ENCODE measurements at regions of chr1 and their contacts with region 1.

Region 1: DNA sequence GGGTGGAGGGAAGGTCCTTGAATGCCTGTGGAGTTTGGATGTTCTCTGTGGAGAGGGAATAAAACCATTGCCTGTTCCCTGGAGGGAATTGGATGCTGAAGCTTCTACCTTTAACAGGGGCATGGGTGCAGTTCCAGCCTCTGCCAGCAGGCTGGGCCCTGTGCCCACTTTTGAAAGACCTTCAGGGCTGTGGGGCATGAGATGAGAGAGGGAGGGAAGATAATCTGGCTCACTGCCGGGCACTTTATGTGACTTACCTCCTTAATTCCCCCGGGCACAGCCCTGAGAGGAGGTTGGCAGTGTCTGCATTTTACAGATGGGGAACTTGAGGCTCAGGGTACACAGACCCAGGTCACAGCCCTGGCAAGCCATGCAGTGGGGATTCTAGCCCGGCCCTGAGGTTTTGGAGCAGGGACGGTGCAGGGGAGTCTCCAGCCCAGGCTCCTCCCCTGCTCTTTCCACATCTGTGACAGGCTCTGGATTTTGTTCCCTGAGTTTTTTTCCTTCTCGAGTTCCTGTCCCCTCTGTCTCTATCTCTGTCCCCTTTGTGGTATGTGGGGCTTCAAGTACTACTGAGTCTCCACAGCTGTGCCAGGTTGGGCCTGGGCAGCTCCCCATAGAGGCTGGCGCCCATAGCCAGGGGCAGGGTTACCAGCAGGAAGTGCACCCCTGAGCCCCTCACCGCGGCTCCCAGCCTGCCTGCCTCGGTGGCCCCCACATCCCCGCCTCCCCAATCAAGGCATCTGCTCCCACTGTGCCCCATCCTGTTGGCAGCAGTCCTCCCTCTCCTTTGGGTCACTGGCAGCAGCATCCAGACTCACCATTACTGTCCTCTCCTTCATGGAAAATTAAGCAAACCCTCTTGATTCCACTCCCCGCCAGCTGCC is 14.0 kb upstream of the THEMIS2 start:
- H3K4me3 ChIP-seq: no peak overlapping the region
- H3K27ac ChIP-seq: no peak overlapping the region
- H3K4me1 ChIP-seq: no peaks in the 10 kb centered on the region
- CTCF ChIP-seq: peak; percentile 89

Region 2: GRCh38 chr1:27489910-27490741 is 368.2 kb before region 1 on chr1 and contains the start of gene WASF2:
- CTCF ChIA-PET with region 1: no interaction called
- POLR2A ChIA-PET with region 1: no interaction called
- H3K4me3 ChIP-seq: peak within 1 kb of the TSS; percentile 86
- H3K27ac ChIP-seq: peak within 1 kb of the TSS; percentile 81
- H3K4me1 ChIP-seq: peaks cover 3% of the 10 kb centered on the region; the same call in 1 of the 2 replicates
- CTCF ChIP-seq: peak; percentile 54; the same call in 1 of the 2 replicates

Region 3: GRCh38 chr1:27713139-27713725 is 145.1 kb before region 1 on chr1:
- CTCF ChIA-PET with region 1: no interaction called
- POLR2A ChIA-PET with region 1: no interaction called
- H3K4me3 ChIP-seq: no peak overlapping the region
- H3K27ac ChIP-seq: no peak overlapping the region
- H3K4me1 ChIP-seq: no peaks in the 10 kb centered on the region
- CTCF ChIP-seq: no peak

Region 4: DNA sequence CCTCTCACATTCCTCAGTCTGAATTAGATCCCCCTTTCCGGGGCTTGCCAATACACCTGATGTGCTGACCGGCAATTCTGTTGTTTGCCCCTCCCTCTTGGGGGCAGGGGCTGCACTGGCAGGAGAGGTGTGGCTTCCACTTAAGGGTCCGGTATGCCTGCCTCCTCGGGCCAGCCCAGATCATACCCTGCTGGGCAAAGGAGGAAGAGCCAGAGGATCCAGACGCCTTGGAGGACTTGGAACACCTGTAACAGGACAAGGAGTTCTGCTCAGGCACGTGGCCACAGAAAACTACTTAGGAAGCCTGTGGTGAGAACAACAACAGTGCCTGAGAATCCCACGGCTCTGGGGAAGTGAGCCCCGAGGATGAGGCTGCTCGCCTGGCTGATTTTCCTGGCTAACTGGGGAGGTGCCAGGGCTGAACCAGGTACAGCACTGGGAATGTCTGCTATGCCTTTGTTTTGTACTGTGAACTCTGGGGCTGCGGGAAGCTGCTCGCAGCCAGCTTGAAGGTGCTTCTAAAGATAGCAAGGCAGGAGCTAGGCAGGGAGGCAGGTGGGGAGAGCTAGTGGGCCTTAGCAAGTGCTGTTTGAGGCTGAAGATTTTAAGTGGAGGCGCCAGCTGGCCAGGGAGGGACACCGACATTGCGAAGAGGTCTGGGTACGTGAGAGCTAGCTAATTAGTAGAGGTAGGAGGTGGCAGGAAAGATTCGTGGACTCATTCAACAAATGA is 76.7 kb after region 1 on chr1 and contains the start of gene SMPDL3B:
- CTCF ChIA-PET with region 1: interaction called, 3 read pairs
- POLR2A ChIA-PET with region 1: interaction called, 11 read pairs
- H3K4me3 ChIP-seq: peak within 1 kb of the TSS; percentile 40
- H3K27ac ChIP-seq: no peak within 1 kb of the TSS; the same call in 1 of the 2 replicates
- H3K4me1 ChIP-seq: peaks cover 3% of the 10 kb centered on the region; the same call in 1 of the 2 replicates
- CTCF ChIP-seq: no peak; the same call in 1 of the 2 replicates

Region 5: GRCh38 chr1:27971674-27972073 is 113.4 kb after region 1 on chr1:
- CTCF ChIA-PET with region 1: interaction called, 11 read pairs
- POLR2A ChIA-PET with region 1: no interaction called
- H3K4me3 ChIP-seq: no peak overlapping the region
- H3K27ac ChIP-seq: no peak overlapping the region
- H3K4me1 ChIP-seq: peaks cover 7% of the 10 kb centered on the region
- CTCF ChIP-seq: no peak

Region 6: GRCh38 chr1:27979151-27979858 is 121.0 kb after region 1 on chr1:
- CTCF ChIA-PET with region 1: interaction called, 30 read pairs
- POLR2A ChIA-PET with region 1: no interaction called
- H3K4me3 ChIP-seq: no peak overlapping the region
- H3K27ac ChIP-seq: no peak overlapping the region
- H3K4me1 ChIP-seq: no peaks in the 10 kb centered on the region
- CTCF ChIP-seq: peak; percentile 44; the same call in 1 of the 2 replicates

Region 7: GRCh38 chr1:28208818-28209441 is 350.6 kb after region 1 on chr1:
- CTCF ChIA-PET with region 1: interaction called, 10 read pairs
- POLR2A ChIA-PET with region 1: interaction called, 4 read pairs
- H3K4me3 ChIP-seq: no peak overlapping the region
- H3K27ac ChIP-seq: no peak overlapping the region
- H3K4me1 ChIP-seq: no peaks in the 10 kb centered on the region
- CTCF ChIP-seq: 0 out of 2 replicates have a peak, but pooled peaks have one; percentile 28

Measured in HEK293 (cell line).